Naive thymus-derived CD4-positive, alpha-beta T cell (primary cell): ENCODE measurements at regions of chr3 and their contacts with region 1.

Region 1: GRCh38 chr3:137105277-137105977 is 147.6 kb downstream of the IL20RB start:
- DNase-seq: peak in 7 of 9 donors; percentile 10 to 56 (median 40)
- ATAC-seq: peak; percentile 67
- H3K4me3 ChIP-seq: no peak overlapping the region
- H3K4me3 Mint-ChIP-seq: no peak overlapping the region
- H3K27ac ChIP-seq: no peak overlapping the region
- H3K27ac Mint-ChIP-seq: no peak overlapping the region
- H3K4me1 ChIP-seq: no peaks in the 10 kb centered on the region
- H3K4me1 Mint-ChIP-seq: no peaks in the 10 kb centered on the region
- H3K27me3 ChIP-seq: no peaks in the 10 kb centered on the region
- H3K27me3 Mint-ChIP-seq: peaks cover 7 to 25% (median 17%) of the 10 kb centered on the region in 5 donors

Region 2: DNA sequence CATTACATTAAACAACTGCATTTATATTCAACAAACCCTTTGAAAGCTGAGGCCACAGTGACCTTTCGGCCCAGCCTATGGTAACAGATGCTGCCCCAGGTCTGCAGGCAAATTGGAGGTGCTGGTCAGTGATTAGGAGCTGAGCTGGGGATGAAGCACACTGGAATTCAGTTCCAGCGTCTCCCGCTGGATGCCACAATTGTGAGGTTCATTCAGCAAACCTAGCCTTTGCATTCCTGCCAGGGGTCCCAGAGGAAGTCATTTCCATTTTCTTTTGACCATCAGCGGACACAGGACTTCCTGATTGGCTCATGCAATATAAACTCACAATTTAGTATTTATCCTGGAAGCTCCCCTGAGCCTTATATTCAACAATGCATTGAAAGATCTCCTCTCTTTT is 58.2 kb before region 1 on chr3:
- CTCF ChIA-PET with region 1: no interaction called
- POLR2A ChIA-PET with region 1: no interaction called
- intact Hi-C with region 1: no loop called
- DNase-seq: no peak
- ATAC-seq: no peak
- H3K4me3 ChIP-seq: no peak overlapping the region
- H3K4me3 Mint-ChIP-seq: no peak overlapping the region
- H3K27ac ChIP-seq: no peak overlapping the region
- H3K27ac Mint-ChIP-seq: no peak overlapping the region
- H3K4me1 ChIP-seq: no peaks in the 10 kb centered on the region
- H3K4me1 Mint-ChIP-seq: no peaks in the 10 kb centered on the region
- H3K27me3 ChIP-seq: no peaks in the 10 kb centered on the region
- H3K27me3 Mint-ChIP-seq: peaks cover 0 to 22% (median 7%) of the 10 kb centered on the region in 5 donors

Region 3: GRCh38 chr3:137792626-137793271 is 687.3 kb after region 1 on chr3:
- CTCF ChIA-PET with region 1: no interaction called
- POLR2A ChIA-PET with region 1: no interaction called
- intact Hi-C with region 1: loop called (anchors 5 to 10 kb)
- DNase-seq: no peak
- ATAC-seq: no peak
- H3K4me3 ChIP-seq: no peak overlapping the region
- H3K4me3 Mint-ChIP-seq: no peak overlapping the region
- H3K27ac ChIP-seq: no peak overlapping the region
- H3K27ac Mint-ChIP-seq: no peak overlapping the region
- H3K4me1 ChIP-seq: no peaks in the 10 kb centered on the region
- H3K4me1 Mint-ChIP-seq: no peaks in the 10 kb centered on the region
- H3K27me3 ChIP-seq: no peaks in the 10 kb centered on the region
- H3K27me3 Mint-ChIP-seq: peaks cover 0 to 26% (median 14%) of the 10 kb centered on the region in 5 donors

Region 4: GRCh38 chr3:137946345-137946973 is 841.0 kb after region 1 on chr3:
- CTCF ChIA-PET with region 1: interaction called, 10 read pairs
- POLR2A ChIA-PET with region 1: no interaction called
- intact Hi-C with region 1: loop called (anchors 1 kb)
- DNase-seq: peak in 8 of 9 donors; percentile 12 to 61 (median 52)
- ATAC-seq: peak; percentile 47
- H3K4me3 ChIP-seq: no peak overlapping the region
- H3K4me3 Mint-ChIP-seq: peak overlapping the region in 1 of 10 donors; percentile 40
- H3K27ac ChIP-seq: no peak overlapping the region
- H3K27ac Mint-ChIP-seq: peak overlapping the region in 1 of 9 donors; percentile 28
- H3K4me1 ChIP-seq: no peaks in the 10 kb centered on the region
- H3K4me1 Mint-ChIP-seq: peaks cover 0 to 7% (median 5%) of the 10 kb centered on the region in 7 donors
- H3K27me3 ChIP-seq: no peaks in the 10 kb centered on the region
- H3K27me3 Mint-ChIP-seq: peaks cover 0 to 5% (median 4%) of the 10 kb centered on the region in 5 donors

Region 5: GRCh38 chr3:137970914-137971831 is 865.7 kb after region 1 on chr3:
- CTCF ChIA-PET with region 1: interaction called, 3 read pairs
- POLR2A ChIA-PET with region 1: no interaction called
- intact Hi-C with region 1: loop called in 1 of 2 experiments (anchors 1 kb)
- DNase-seq: peak in 8 of 9 donors; percentile 6 to 61 (median 23)
- ATAC-seq: peak; percentile 47
- H3K4me3 ChIP-seq: no peak overlapping the region
- H3K4me3 Mint-ChIP-seq: no peak overlapping the region
- H3K27ac ChIP-seq: no peak overlapping the region
- H3K27ac Mint-ChIP-seq: no peak overlapping the region
- H3K4me1 ChIP-seq: no peaks in the 10 kb centered on the region
- H3K4me1 Mint-ChIP-seq: peaks cover 0 to 5% (median 3%) of the 10 kb centered on the region in 7 donors
- H3K27me3 ChIP-seq: no peaks in the 10 kb centered on the region
- H3K27me3 Mint-ChIP-seq: peaks cover 3 to 21% (median 9%) of the 10 kb centered on the region in 5 donors

Region 6: GRCh38 chr3:138118612-138119422 is 1013.4 kb after region 1 on chr3:
- CTCF ChIA-PET with region 1: no interaction called
- POLR2A ChIA-PET with region 1: no interaction called
- intact Hi-C with region 1: loop called in 1 of 2 experiments (anchors 1 kb)
- DNase-seq: peak in 6 of 9 donors; percentile 10 to 57 (median 24)
- ATAC-seq: peak; percentile 65
- H3K4me3 ChIP-seq: no peak overlapping the region
- H3K4me3 Mint-ChIP-seq: no peak overlapping the region
- H3K27ac ChIP-seq: no peak overlapping the region
- H3K27ac Mint-ChIP-seq: no peak overlapping the region
- H3K4me1 ChIP-seq: no peaks in the 10 kb centered on the region
- H3K4me1 Mint-ChIP-seq: peaks cover 2 to 13% (median 8%) of the 10 kb centered on the region in 7 donors
- H3K27me3 ChIP-seq: peaks cover 0 to 4% of the 10 kb centered on the region in 2 donors
- H3K27me3 Mint-ChIP-seq: peaks cover 19 to 58% (median 31%) of the 10 kb centered on the region in 5 donors